Esophagus squamous epithelium (tissue), 5 donors: ENCODE measurements at regions of chr1 and their contacts with region 1.

Region 1: DNA sequence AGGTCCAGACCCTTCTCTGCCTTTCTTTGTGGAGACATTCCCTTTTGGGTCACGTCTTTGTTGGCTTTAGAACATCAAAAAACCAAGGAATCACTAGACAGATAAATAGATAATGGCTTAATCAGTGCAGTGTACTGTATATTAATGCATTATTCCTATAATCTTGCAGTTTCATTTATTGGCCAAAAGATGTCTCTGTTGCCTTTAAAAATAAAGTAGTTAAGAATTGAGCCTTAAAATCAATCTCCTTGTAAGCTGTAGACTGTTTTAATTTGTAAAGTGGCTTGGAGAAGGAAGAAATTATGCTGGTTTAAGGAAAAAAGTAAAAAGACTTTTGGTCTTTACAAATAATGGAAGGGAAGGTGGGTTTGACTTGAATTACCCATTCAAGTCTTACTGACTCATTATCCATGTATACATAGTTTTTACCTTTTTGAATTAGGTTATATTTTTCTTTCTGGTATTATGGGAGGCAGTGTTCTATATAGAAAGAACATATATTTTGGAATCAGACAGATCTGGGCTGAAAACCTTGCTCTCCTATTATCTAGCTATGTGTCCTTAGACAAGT is 84.6 kb downstream of the VPS13D start:
- DNase-seq: no peak
- H3K4me3 ChIP-seq: no peak overlapping the region
- H3K27ac ChIP-seq: peak overlapping the region in 3 of 4 donors; percentile 15 to 78 (median 67)
- H3K4me1 ChIP-seq: peaks cover 0 to 47% (median 16%) of the 10 kb centered on the region in 3 donors
- H3K27me3 ChIP-seq: no peaks in the 10 kb centered on the region
- CTCF ChIP-seq: peak in 5 of 6 experiments; percentile 27 to 52 (median 34)
- POLR2A ChIP-seq: no peak

Region 2: DNA sequence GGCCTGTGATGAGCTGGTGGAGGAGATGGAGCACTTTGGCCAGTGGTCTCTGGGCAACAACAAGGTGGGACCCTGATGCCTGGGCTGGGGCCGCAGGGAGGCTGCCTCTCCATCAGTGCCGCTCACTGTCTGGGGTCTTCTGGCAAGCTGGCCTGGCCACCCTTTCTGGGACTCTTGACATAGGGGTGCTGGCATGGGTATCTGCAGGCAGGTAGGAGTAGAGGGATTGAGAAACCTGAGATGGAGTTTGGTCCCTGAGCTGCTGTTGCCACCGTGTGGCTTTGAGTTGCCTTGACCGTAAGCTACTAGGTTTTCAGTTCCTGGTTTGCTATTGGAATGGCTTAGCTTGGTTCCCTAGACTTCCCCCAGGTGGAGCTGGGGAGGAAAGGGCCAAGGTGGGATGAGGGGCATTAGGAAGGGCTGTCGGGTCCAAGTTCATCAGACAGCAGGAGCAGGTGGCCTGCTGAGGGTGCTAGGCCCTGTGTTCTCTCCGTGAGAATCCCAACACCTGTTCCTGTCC is 347.3 kb before region 1 on chr1:
- intact Hi-C with region 1: no loop called
- DNase-seq: no peak
- H3K4me3 ChIP-seq: no peak overlapping the region
- H3K27ac ChIP-seq: peak overlapping the region in 3 of 4 donors; percentile 69 to 86 (median 78)
- H3K4me1 ChIP-seq: peaks cover 0 to 52% (median 0%) of the 10 kb centered on the region in 3 donors
- H3K27me3 ChIP-seq: no peaks in the 10 kb centered on the region
- CTCF ChIP-seq: peak in 5 of 6 experiments; percentile 34 to 75 (median 53)
- POLR2A ChIP-seq: no peak

Region 3: DNA sequence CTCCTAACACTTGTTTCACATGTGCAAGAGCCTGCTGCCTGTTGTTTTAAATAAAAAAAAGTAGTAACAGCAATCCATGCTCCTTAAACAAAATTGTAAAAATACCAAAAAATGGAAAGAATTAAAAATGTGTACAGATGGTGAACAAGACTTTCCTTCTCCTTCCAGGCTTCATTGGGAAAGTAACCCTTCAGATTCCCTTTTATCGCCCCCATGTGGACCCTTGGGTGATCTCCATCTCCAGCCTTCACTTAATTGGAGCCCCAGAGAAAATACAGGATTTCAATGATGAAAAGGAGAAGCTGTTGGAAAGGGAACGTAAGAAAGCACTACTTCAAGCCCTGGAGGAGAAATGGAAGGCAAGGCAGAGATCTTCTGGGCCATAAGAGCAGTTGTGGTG is 70.3 kb before region 1 on chr1:
- intact Hi-C with region 1: no loop called
- DNase-seq: no peak
- H3K4me3 ChIP-seq: no peak overlapping the region
- H3K27ac ChIP-seq: peak overlapping the region; percentile 54 to 83 (median 72)
- H3K4me1 ChIP-seq: peaks cover 0 to 42% (median 10%) of the 10 kb centered on the region in 3 donors
- H3K27me3 ChIP-seq: no peaks in the 10 kb centered on the region
- CTCF ChIP-seq: peak in 3 of 6 experiments; percentile 18 to 23 (median 21)
- POLR2A ChIP-seq: no peak

Region 4: GRCh38 chr1:12409681-12410080 is 95.3 kb after region 1 on chr1:
- intact Hi-C with region 1: no loop called
- DNase-seq: no peak
- H3K4me3 ChIP-seq: no peak overlapping the region
- H3K27ac ChIP-seq: peak overlapping the region; percentile 53 to 81 (median 71)
- H3K4me1 ChIP-seq: peaks cover 15 to 70% (median 40%) of the 10 kb centered on the region in 3 donors
- H3K27me3 ChIP-seq: no peaks in the 10 kb centered on the region
- CTCF ChIP-seq: no peak
- POLR2A ChIP-seq: no peak

Region 5: GRCh38 chr1:12619792-12620487 is 305.5 kb after region 1 on chr1:
- intact Hi-C with region 1: loop called (anchors 10 kb)
- DNase-seq: no peak
- H3K4me3 ChIP-seq: peak overlapping the region; percentile 53 to 97 (median 80)
- H3K27ac ChIP-seq: peak overlapping the region; percentile 96 to 100 (median 98)
- H3K4me1 ChIP-seq: peaks cover 38 to 65% (median 38%) of the 10 kb centered on the region in 3 donors
- H3K27me3 ChIP-seq: no peaks in the 10 kb centered on the region
- CTCF ChIP-seq: peak; percentile 89 to 99 (median 98)
- POLR2A ChIP-seq: no peak